Psoas muscle (tissue), 8 donors: ENCODE measurements at regions of chr3 and their contacts with region 1.

Region 1: DNA sequence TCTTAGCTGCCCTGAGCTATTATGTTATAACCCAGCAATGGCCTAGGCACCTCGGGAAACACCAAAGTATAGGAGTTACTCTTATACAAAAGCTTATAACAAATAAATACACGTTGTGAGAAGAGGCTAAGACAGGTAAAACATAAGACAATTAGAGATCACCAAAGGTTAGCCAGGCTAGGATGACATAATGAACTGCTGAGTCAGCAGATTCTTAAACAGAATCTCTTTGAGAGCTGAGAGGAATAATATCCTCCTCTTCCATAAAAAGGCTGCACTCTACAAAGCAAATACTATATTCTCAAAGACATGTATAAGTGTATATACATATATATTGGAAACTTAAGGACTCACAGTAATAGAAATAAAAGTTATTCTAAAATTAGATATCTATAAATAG is 37.2 kb downstream of the GOLIM4 start:
- DNase-seq: no peak
- ATAC-seq: no peak
- H3K4me3 ChIP-seq: no peak overlapping the region
- H3K27ac ChIP-seq: no peak overlapping the region
- H3K4me1 ChIP-seq: peaks cover 12% of the 10 kb centered on the region
- H3K27me3 ChIP-seq: no peaks in the 10 kb centered on the region
- CTCF ChIP-seq: no peak

Region 2: DNA sequence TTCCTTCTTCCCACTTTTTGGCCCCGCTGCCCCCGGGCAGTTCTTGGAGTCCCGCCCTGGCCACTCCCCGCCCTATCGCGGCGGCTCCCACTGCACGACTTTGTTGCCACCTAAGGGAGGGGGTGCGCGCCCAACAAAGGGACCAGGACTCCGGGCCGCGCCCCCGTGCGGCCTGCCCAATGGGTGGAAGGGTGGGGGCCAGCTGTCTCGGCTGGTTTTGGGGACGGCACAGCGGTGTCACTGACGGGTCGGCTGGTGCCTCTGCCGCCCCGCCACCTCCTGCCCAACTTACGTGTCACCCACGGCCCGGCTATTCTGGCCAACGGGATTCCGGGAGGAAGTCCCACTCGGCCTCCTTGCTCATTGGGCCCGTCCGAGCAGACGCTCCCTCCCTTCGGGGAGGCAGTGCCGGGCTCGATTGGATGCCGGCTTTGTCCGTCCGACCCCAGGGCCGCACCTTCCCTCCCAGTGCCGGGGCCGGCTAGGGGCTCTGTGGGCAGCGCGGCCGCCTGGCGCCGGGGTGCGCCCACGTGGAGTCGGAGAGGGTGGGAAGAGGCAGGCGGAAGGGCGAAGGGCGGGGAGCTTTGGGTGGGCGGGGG is 37.2 kb after region 1 on chr3 and contains the start of gene GOLIM4:
- intact Hi-C with region 1: loop called in 1 of 2 experiments (anchors 5 kb)
- DNase-seq: peak; percentile 96 to 97
- ATAC-seq: peak; percentile 94 to 95 (median 94)
- H3K4me3 ChIP-seq: peak within 1 kb of the TSS; percentile 92
- H3K27ac ChIP-seq: peak within 1 kb of the TSS; percentile 95
- H3K4me1 ChIP-seq: peaks cover 30% of the 10 kb centered on the region
- H3K27me3 ChIP-seq: no peaks in the 10 kb centered on the region
- CTCF ChIP-seq: peak; percentile 6
- total RNA-seq, gene GOLIM4: 13.4 to 34.1 (median 25.2) TPM